SK-N-SH (cell line): ENCODE measurements at regions of chr20 and their contacts with region 1.

Region 1: GRCh38 chr20:49323622-49324238 is 45.9 kb upstream of the ZNFX1 start:
- DNase-seq: peak; percentile 41
- H3K4me3 ChIP-seq: no peak overlapping the region
- H3K27ac ChIP-seq: no peak overlapping the region; a peak in 1 of 4 replicates
- H3K4me1 ChIP-seq: peaks cover 0 to 8% of the 10 kb centered on the region in 2 experiments; a peak in 1 of 4 replicates
- H3K27me3 ChIP-seq: peaks cover 14% of the 10 kb centered on the region
- CTCF ChIP-seq: peak; percentile 56
- EP300 ChIP-seq: no peak
- RAD21 ChIP-seq: peak; percentile 72

Region 2: GRCh38 chr20:49303065-49303552 is 20.6 kb before region 1 on chr20:
- CTCF ChIA-PET with region 1: interaction called, 13 read pairs
- POLR2A ChIA-PET with region 1: no interaction called
- DNase-seq: no peak
- H3K4me3 ChIP-seq: no peak overlapping the region
- H3K27ac ChIP-seq: peak overlapping the region; percentile 62 to 71; a peak in 3 of 4 replicates
- H3K4me1 ChIP-seq: peaks cover 4 to 11% of the 10 kb centered on the region in 2 experiments; a peak in 1 of 4 replicates
- H3K27me3 ChIP-seq: no peaks in the 10 kb centered on the region
- CTCF ChIP-seq: no peak
- EP300 ChIP-seq: peak; percentile 64 to 70; a peak in 3 of 4 replicates
- RAD21 ChIP-seq: 0 out of 2 replicates have a peak, but pooled peaks have one; percentile 5